Left cardiac atrium (tissue), 4 donors: ENCODE measurements at regions of chr2 and their contacts with region 1.

Region 1: GRCh38 chr2:221969087-221969829 is 329.5 kb downstream of the PAX3 start:
- DNase-seq: no peak
- ATAC-seq: peak; percentile 41 to 74

Region 2: DNA sequence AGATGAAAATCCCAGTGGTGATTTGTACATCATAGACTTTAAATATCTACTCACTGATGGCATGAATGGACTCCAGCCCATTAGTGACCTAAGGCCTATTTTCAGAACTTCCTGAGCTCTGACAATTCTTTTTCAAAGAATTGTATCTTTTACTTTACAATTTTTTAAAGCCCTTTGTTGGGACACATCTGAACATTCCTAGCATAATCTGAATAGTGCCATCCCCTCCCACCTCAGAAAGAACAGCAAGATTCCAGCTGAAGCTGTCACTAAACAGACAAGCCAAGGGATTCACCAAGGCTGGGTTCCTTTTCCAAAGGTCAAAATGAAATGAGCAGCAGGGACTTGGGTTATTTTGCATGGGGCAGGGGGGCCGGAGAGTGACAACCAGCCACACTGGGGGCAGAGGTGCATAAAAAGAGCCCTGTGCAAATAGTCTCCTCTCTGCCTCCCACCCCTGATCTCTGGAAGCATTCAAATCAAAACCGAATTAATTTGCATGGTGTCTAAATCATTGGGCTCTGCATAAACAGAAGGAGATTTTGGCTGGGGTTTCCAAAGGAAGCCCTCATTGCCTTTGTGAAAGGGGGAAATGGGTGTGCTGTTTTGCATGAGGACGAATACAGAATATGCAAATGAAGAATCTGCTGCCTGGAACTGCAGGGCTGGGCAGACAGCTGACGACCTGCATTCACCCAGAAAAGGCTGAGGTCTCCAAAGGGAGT is 414.3 kb before region 1 on chr2:
- intact Hi-C with region 1: no loop called
- DNase-seq: no peak
- ATAC-seq: peak; percentile 53 to 59

Region 3: DNA sequence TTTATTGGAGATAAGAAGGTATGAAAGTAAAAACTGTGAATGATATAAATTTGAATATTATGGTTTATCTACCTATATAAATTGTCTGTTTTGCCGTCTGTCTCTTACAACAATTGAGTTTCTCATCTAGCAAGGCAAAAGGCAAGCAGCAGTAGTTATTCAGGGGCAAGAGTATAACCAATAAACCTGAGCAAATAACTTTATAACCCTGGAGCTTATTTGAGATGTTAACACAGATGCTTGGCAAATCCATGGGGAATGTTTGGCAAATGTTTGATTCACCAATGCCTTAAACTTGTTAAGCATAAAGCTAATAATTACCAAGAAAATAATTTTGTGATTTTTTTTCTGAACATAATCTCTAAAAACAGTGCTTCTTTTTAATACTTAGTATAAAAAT is 387.3 kb before region 1 on chr2:
- intact Hi-C with region 1: loop called in 1 of 2 experiments (anchors 10 kb)
- DNase-seq: no peak
- ATAC-seq: no peak

Region 4: DNA sequence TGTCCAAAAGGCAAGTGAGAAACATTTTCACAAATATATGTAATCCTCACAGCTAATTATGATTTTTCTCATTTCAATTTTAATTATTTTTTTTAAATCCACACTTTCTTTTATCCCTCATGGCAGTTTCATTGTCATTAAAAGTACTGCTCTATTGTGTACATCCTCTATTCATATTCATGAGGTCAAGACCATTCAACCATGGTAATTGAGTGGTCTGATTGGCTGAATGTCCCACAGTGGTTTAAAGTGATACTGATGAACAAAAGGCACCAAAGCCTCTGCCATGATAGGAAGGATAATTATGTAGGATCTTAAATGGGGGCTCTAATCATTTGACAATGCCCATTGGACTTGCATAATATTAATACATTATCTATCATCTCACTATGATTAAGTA is 288.7 kb before region 1 on chr2:
- intact Hi-C with region 1: no loop called
- DNase-seq: no peak
- ATAC-seq: no peak

Region 5: DNA sequence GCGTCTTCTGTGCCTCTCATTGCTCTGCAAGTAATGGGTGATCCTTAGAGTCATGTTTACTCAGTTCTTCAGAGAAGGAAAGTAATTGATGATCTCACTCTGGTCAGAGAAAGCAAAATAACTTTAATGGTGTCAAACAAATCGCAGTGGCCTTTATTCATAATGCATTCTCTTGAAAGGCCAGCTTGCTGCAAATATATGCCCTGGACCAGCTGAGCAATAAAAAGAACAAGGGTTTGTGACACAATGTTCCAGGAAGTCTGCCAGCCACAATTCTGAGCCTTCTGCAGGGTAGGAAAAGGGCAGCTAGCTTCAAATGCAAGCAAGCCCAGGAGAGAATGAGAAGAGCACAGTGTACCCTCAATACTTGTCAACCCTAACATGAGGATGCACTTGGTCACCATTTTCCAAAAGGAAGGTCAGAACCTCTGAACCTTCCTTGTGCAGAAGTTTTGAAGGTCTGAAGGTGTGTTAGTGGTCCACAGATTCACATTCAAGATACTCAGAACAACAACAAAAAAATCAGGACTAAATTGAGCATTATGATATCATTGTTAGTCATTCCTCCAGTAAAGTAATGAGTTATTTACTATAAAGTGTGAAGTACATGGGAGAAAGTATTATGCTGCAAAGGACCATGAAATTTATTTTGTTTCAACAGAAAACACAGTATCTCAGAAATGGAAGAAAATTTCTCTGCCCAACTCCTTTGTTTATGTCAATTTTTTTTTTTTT is 26.0 kb before region 1 on chr2:
- intact Hi-C with region 1: no loop called
- DNase-seq: no peak
- ATAC-seq: peak; percentile 47 to 80

Region 6: GRCh38 chr2:222024932-222025880 is 55.9 kb after region 1 on chr2:
- intact Hi-C with region 1: no loop called
- DNase-seq: no peak
- ATAC-seq: peak in 1 of 2 donors; percentile 23